Head of caudate nucleus (tissue), 42 donors: ENCODE measurements at regions of chr12 and their contacts with region 1.

Region 1: DNA sequence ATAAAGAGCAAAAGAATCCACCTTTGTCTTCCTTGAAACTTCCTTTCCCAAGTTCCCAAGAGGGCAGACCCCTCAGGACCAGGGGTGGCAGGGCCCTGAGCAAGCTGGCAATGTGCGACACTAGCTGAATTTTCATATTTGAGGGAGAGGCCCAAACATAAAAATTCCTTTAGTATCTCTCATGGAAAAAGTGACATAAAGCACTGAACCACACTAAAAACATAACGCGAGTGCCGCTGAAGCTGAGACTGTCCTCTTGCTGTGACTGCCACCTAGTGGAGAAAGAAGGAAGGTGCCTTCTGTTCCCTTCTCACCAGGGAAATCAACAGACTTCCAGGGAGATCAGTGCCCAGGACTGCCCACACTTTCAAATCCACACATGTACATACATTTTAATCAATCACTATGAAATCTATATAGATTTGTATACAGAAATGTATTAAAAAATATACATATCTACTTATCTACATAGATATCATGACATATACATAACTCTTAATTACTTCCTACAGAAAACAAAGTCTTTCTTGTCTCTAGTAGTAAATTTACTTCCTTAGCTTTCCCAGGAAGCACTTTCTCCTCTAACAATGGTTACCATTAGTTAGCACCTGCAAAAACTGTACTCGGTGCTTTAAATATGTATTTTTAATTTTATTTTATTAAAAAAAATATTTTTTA is 53.8 kb downstream of the SSH1 start:
- DNase-seq: peak; percentile 26 to 94 (median 82)

Region 2: DNA sequence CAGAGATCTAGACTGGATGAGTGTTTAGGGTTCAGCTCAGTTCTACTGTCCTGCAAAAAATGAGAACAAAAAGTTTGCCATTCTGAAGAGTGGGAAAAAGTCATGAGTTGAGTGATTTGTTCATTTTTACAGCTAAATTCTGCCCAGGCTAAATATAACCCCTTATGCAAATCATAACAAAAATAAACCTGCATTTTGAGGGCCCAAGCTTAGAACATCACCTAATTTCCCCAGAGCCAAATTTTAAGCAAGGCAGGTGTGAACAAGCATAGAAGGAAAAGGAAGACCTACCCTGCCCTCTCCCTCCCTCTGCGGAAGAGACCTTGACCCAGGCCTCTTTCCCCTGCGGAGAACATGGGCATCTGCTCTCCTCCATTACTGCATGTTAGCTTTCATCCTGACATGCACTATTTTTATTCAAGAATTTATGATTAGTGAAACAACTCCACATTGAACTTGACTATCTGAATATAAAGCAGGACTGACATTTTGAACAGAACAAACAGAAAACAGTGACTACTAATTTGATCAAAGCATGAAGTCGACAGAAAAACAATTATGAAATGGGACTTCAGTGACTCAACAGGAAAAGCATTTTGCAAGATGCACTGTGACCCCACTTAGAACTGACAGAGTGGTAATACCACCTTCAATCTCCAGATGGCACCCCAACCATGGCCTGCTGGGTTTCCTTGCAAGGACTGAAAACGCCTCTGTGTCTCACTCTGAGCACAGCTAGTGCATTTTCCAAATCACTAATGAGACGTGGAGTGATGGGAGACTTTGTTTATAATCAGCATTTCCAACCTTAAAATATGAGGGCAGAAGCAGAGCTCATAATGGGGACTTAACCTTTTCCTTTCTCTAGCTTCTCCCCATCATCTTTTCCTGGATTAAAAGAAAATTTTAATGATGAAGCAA is 139.0 kb before region 1 on chr12:
- intact Hi-C with region 1: loop called (anchors 2 kb)
- DNase-seq: peak; percentile 56 to 96 (median 88)

Region 3: DNA sequence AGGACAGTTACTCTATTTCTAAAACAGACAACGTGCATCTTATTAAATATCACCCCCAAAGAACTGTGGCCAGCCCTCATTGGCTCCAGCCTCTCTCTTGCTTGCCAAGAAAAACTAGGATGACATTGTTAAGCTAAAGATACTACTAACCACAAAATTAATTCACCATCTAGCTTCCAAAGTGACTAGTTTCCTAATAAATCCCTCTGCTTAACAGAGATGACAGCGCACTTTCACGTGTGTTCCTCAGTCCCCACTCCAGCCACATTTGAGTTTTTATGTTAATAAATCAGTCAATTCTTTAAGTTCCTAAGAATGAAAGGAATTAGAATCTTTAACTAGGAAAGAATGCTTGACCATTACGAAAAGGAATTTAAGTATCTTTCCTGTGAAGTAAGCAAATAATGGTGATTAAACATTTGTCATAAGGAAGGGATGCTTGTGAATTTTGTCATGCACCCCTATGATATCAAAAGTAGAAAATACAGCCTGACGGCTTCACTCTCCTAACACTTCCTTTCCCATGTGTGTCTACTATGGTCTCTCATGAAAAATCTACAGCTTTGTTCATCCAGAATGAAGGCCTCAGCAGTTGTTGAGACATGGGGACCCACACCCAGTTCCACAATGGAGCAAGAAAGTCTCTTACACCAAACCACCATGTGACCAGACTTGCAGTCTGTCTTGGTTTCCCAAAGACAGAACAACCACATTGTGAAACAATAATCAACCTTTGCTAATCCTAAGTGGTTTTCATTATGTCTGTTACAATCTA is 80.4 kb before region 1 on chr12:
- intact Hi-C with region 1: no loop called
- DNase-seq: peak in 2 of 42 donors; percentile 19 to 33

Region 4: DNA sequence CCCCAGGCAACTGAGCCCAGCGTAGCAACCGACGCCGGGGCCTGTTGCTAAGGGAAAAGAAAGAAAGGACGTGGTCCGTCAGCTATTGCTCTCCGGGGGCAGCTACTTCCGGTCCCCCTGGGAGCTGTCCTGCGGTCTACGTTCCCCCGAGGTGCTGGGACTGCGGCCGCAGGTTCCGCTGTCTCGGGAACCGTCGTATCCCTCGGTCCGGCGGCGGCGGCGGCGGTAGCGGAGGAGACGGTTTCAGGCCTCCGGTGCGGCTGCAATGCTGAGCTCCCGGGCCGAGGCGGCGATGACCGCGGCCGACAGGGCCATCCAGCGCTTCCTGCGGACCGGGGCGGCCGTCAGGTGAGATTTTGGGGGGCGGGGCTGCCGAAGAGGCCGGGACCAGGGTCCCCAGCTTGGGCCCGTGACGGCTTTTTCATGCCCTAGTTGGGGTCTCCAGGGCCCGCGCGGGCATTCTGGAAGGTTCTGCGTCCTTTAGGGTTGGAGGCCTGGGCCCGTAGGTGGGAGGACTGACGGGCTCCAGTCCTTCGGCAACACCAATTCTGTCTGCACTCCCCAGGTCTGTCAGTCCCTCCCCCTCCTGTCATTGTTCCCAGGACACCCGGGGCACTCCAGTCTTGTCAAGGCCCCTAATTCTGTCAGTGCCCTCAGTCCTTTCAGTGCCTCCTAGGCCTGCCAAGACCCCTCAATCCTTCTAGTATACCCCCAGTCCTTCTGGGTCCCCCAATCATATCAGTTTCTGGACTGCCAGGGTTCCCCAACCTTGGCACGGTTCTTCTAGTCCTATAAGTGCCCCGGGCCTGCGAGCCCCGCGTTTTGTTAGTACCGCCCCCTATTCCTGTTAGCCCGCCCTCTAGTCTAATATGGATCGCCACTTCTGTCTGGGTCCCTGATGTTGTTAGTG is 249.1 kb after region 1 on chr12 and contains the start of gene USP30:
- intact Hi-C with region 1: no loop called
- DNase-seq: peak; percentile 79 to 96 (median 90)